Activated CD8-positive, alpha-beta memory T cell treated with anti-CD3 and anti-CD28 coated beads, Interleukin-2, amount 10 ng/mL, durations not matched to agents 7 days and 5 days (primary cell): ENCODE measurements at regions of chr14 and their contacts with region 1.

Region 1: GRCh38 chr14:24080888-24081738 is 9.8 kb downstream of the CPNE6 start:
- DNase-seq: peak; percentile 90
- ATAC-seq: peak; percentile 93
- H3K4me3 Mint-ChIP-seq: peak overlapping the region; percentile 75
- H3K27ac Mint-ChIP-seq: peak overlapping the region; percentile 81
- H3K4me1 Mint-ChIP-seq: peaks cover 17% of the 10 kb centered on the region
- H3K27me3 Mint-ChIP-seq: no peaks in the 10 kb centered on the region

Region 2: DNA sequence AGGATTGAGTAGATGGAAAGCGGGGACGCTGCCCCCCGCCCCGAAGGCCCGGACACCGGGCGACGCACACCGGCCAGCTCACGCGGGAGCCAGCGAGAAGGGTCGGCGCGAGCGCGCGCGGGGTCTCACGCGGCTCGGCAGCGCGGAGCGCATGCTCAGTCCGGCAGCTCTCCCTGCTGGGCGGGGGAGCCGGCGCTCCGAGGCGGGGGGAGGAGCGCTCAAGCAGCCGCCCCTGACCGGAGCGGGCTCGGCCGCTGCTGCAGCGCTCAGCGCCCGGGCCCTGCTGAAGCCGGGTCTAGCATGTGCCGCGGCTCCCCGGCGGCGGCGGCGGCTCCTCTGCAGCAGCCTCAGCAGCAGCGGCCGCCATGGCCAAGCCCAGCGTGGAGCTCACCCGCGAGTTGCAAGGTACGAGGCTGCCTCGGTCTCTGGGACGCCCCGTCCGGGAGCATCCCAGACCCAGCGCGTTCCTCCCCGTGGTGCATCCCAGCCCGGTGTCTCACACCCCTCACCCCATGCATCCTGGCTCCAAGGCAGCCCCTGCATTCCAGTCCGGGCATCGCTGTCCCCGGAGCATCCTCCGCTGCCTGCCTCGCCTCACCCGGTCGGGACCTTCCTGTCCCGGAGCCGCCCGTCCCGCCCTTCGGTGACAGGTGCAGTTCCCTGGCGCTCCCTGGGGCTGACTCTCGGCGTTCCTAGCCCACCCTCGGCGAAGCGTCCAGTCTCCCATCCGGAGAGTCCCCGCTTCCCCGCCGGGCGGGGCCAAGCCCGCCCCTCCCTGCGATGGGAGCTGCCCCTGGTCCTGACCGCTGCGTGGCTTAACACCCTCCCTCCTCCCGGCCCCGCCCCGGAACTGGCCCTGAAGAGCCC is 29.1 kb before region 1 on chr14 and contains the start of gene CARMIL3:
- CTCF ChIA-PET with region 1: interaction called, 33 read pairs
- DNase-seq: peak; percentile 79
- ATAC-seq: peak; percentile 88
- H3K4me3 Mint-ChIP-seq: peak within 1 kb of the TSS; percentile 74
- H3K27ac Mint-ChIP-seq: peak within 1 kb of the TSS; percentile 32
- H3K4me1 Mint-ChIP-seq: peaks cover 16% of the 10 kb centered on the region
- H3K27me3 Mint-ChIP-seq: peaks cover 32% of the 10 kb centered on the region
- total RNA-seq, gene CARMIL3: 2.9 to 3.3 TPM

Region 3: GRCh38 chr14:24058260-24058950 is 22.7 kb before region 1 on chr14:
- CTCF ChIA-PET with region 1: interaction called, 33 read pairs
- DNase-seq: peak; percentile 69
- ATAC-seq: peak; percentile 74
- H3K4me3 Mint-ChIP-seq: no peak overlapping the region
- H3K27ac Mint-ChIP-seq: no peak overlapping the region
- H3K4me1 Mint-ChIP-seq: peaks cover under 1% of the 10 kb centered on the region
- H3K27me3 Mint-ChIP-seq: peaks cover 11% of the 10 kb centered on the region

Region 4: GRCh38 chr14:24299255-24300195 is 218.4 kb after region 1 on chr14 and contains the starts of genes DHRS1 and NOP9:
- CTCF ChIA-PET with region 1: no interaction called
- DNase-seq: peak; percentile 93
- ATAC-seq: peak; percentile 87
- H3K4me3 Mint-ChIP-seq: peak within 1 kb of the TSS; percentile 86
- H3K27ac Mint-ChIP-seq: peak within 1 kb of the TSS; percentile 89
- H3K4me1 Mint-ChIP-seq: peaks cover 55% of the 10 kb centered on the region
- H3K27me3 Mint-ChIP-seq: no peaks in the 10 kb centered on the region
- total RNA-seq, gene DHRS1: 14.2 to 26.5 TPM
- total RNA-seq, gene NOP9: 34.2 to 38.3 TPM